ENCODE measurements at regions of chr17 and their contacts with region 1.

Region 1: GRCh38 chr17:6853764-6854442 is 22.4 kb upstream of the TEKT1 start:
- DNase-seq: no peak
- H3K4me3 ChIP-seq: no peak overlapping the region
- CTCF ChIP-seq: peak; percentile 32

Region 2: DNA sequence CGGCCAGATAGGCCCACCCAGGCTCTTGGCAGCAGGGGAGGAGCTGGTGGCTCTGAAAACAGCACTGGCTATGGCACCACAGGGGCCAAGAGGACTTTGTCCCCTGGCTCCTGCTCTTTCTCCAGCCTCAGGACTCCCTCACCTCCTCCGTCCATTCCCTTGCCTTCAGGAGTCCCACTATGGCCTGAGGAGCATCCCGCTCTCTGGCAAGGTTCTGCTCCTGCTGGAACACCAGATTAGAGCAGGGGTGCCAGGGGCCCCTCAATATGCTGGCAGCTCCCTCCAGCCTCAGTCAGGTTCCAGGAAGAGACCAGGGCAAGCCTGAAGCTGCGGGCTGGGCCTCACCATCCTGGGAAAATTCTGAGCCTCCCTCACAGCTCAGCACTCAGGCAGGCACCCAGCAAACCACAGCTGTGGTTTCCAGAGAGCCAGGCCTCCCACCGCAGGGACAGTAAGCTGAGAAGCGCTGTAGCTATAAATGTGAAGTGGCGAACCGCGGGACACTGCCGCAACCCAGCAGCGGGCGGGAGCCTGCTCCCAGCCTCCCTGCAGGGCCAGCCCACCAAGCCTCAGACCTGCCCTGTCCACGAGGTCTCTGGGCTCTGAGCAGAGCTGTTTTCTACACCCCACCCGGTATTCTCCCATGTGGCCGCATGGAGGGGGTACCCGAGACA is 176.6 kb before region 1 on chr17:
- in situ Hi-C with region 1: loop called (anchors 25 kb)
- DNase-seq: no peak
- H3K4me3 ChIP-seq: no peak overlapping the region
- CTCF ChIP-seq: no peak

Region 3: GRCh38 chr17:6995431-6996255 is 141.7 kb after region 1 on chr17 and contains the start of gene ALOX12:
- in situ Hi-C with region 1: no loop called
- DNase-seq: no peak
- H3K4me3 ChIP-seq: peak within 1 kb of the TSS; percentile 6
- CTCF ChIP-seq: no peak

Measured in astrocyte of the cerebellum (primary cell).